Activated CD8-positive, alpha-beta T cell treated with anti-CD3 and anti-CD28 coated beads for 36 hours (primary cell): ENCODE measurements at regions of chr1 and their contacts with region 1.

Region 1: GRCh38 chr1:167454894-167455785 is 63.2 kb downstream of the CD247 start:
- DNase-seq: peak; percentile 90
- ATAC-seq: peak; percentile 54
- H3K4me3 Mint-ChIP-seq: peak overlapping the region; percentile 76
- H3K27ac Mint-ChIP-seq: peak overlapping the region; percentile 84
- H3K4me1 Mint-ChIP-seq: peaks cover 71% of the 10 kb centered on the region
- H3K27me3 Mint-ChIP-seq: no peaks in the 10 kb centered on the region
- CTCF ChIP-seq: no peak

Region 2: GRCh38 chr1:167136191-167136614 is 318.9 kb before region 1 on chr1:
- CTCF ChIA-PET with region 1: no interaction called
- POLR2A ChIA-PET with region 1: no interaction called
- intact Hi-C with region 1: no loop called
- DNase-seq: no peak
- ATAC-seq: no peak
- H3K4me3 Mint-ChIP-seq: no peak overlapping the region
- H3K27ac Mint-ChIP-seq: no peak overlapping the region
- H3K4me1 Mint-ChIP-seq: no peaks in the 10 kb centered on the region
- H3K27me3 Mint-ChIP-seq: peaks cover 4% of the 10 kb centered on the region
- CTCF ChIP-seq: no peak

Region 3: GRCh38 chr1:167442124-167442848 is 12.9 kb before region 1 on chr1:
- CTCF ChIA-PET with region 1: interaction called, 29 read pairs
- POLR2A ChIA-PET with region 1: interaction called, 18 read pairs
- intact Hi-C with region 1: no loop called
- DNase-seq: peak; percentile 93
- ATAC-seq: peak; percentile 73
- H3K4me3 Mint-ChIP-seq: no peak overlapping the region
- H3K27ac Mint-ChIP-seq: peak overlapping the region; percentile 68
- H3K4me1 Mint-ChIP-seq: peaks cover 88% of the 10 kb centered on the region
- H3K27me3 Mint-ChIP-seq: no peaks in the 10 kb centered on the region
- CTCF ChIP-seq: peak; percentile 88

Region 4: GRCh38 chr1:167467126-167467710 is 12.1 kb after region 1 on chr1:
- CTCF ChIA-PET with region 1: interaction called, 10 read pairs
- POLR2A ChIA-PET with region 1: interaction called, 28 read pairs
- intact Hi-C with region 1: no loop called
- DNase-seq: no peak
- ATAC-seq: peak; percentile 58
- H3K4me3 Mint-ChIP-seq: no peak overlapping the region
- H3K27ac Mint-ChIP-seq: peak overlapping the region; percentile 2
- H3K4me1 Mint-ChIP-seq: peaks cover 80% of the 10 kb centered on the region
- H3K27me3 Mint-ChIP-seq: no peaks in the 10 kb centered on the region
- CTCF ChIP-seq: no peak

Region 5: DNA sequence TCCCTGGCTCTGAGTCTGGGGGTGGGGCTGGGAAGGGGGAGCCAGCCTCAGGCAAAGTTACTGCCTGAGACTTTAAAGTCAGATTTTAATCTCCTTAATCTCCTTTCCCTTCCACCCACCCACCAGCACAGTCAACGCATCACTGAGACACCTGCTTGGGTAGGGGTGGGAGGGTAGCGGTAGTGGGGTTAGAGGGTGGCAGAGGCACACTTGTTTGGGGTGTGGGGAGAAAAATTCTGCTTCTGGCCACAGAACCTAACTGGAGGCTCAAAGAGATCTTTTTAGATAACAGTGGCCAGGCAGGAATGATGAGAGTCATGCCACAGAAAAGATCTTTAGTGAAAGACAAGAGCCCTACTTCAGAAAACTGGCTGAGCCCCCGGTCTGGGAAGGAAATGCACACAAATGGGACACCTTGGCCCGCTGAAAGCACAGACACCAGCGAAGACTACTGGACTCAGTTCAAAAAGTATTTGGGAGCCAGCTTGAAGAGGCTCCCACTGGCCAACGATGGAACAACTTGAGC is 19.1 kb after region 1 on chr1:
- CTCF ChIA-PET with region 1: interaction called, 10 read pairs
- POLR2A ChIA-PET with region 1: interaction called, 85 read pairs
- intact Hi-C with region 1: no loop called
- DNase-seq: peak; percentile 72
- ATAC-seq: peak; percentile 58
- H3K4me3 Mint-ChIP-seq: peak overlapping the region; percentile 59
- H3K27ac Mint-ChIP-seq: peak overlapping the region; percentile 86
- H3K4me1 Mint-ChIP-seq: peaks cover 88% of the 10 kb centered on the region
- H3K27me3 Mint-ChIP-seq: no peaks in the 10 kb centered on the region
- CTCF ChIP-seq: no peak

Region 6: DNA sequence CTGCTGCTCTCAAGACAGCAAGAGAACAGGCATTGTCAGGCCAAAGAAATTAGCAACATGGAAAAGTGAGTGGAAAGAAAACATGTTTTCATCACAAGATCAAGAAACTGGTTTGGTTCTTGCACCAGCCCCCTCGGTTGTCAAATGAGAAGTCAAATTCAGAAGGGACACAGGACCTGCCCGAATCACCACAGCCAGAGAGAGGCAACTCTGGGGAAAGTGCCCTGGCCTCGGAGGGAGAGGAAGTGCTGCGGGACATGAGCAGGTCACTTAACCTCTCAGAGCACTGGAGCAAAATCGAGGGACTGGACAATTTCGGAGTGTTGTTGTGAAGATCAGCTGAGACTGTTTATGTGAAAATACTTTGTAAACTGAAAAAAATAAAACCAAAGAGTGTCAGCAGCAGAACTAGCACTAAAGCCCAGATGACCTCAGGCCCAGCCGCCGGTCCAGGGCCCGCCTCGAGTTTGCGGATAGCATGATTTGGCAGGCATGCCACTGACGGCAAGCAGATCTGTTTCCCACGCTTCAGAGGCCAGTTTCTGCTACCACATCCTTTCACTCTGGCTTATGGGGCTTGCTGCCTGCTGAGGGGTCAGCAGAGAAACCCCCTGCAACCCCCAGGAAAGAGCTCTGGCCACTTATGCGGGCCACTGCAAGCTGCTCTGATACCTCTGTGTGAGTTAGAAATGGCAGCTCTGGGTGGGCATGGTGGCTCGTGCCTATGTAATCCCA is 31.1 kb after region 1 on chr1:
- CTCF ChIA-PET with region 1: interaction called, 8 read pairs
- POLR2A ChIA-PET with region 1: interaction called, 85 read pairs
- intact Hi-C with region 1: no loop called
- DNase-seq: peak; percentile 62
- ATAC-seq: no peak
- H3K4me3 Mint-ChIP-seq: peak overlapping the region; percentile 56
- H3K27ac Mint-ChIP-seq: peak overlapping the region; percentile 93
- H3K4me1 Mint-ChIP-seq: peaks cover 94% of the 10 kb centered on the region
- H3K27me3 Mint-ChIP-seq: no peaks in the 10 kb centered on the region
- CTCF ChIP-seq: no peak

Region 7: DNA sequence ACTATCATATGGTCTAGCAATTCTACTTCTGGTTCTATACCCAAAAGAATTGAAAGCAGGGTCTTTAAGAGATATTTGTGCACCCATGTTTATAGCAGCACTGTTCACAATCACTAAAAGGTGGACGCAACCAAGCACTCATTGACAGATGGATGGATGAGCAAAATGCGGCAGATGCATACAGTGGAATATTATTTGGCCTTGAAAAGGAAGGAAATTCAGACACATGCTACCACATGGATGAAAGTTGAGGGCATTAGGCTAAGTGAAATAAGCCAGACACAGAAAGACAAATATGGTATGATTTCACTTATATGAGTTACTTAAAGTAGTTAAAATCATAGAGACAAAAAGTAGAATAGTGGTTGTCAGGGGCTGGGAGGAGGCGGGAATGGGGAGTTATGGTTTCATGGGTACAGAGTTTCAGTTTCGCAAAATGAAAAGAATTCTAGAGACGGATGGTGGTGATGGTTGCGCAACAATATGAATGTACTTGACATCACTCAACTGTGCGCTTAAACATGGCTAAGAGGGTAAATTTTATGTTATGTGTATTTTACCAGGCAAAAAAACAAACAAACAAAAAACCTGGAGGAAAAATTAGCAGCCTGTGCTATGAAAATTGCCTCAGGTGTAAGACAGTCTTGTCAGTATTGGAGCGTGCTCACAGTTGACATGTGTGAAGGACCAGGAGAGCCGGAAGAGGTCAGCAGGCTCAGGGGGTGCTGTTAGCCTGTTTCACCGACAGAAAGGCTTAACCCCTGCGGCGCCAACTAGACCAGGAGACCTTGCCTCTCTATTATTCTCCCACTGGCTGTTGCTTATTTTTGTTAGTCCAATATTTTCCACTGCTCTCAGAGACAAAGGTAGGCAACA is 36.7 kb after region 1 on chr1:
- CTCF ChIA-PET with region 1: interaction called, 4 read pairs
- POLR2A ChIA-PET with region 1: interaction called, 85 read pairs
- intact Hi-C with region 1: no loop called
- DNase-seq: peak; percentile 74
- ATAC-seq: peak; percentile 46
- H3K4me3 Mint-ChIP-seq: peak overlapping the region; percentile 67
- H3K27ac Mint-ChIP-seq: peak overlapping the region; percentile 96
- H3K4me1 Mint-ChIP-seq: peaks cover 91% of the 10 kb centered on the region
- H3K27me3 Mint-ChIP-seq: no peaks in the 10 kb centered on the region
- CTCF ChIP-seq: no peak

Region 8: DNA sequence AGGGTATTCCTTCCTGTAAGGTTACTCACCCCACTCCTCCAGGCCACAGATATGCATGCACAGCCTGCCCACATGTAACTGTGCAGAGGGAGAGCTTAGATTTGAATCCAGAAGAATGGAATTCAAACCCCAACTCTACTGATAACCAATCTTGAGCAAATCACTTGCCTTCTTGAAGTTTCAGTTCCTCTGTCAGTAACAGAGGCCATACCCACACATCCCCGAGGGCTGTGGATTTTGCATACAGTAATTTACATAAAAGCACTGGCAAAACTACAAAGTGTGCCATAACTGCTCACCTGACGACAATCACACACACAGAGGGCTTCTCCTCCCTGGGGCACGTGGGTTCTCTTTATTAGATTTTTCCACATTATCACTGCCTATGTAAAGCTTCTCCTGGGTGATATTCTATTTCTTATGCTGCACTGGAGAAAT is 44.5 kb after region 1 on chr1:
- CTCF ChIA-PET with region 1: interaction called, 25 read pairs
- POLR2A ChIA-PET with region 1: interaction called, 33 read pairs
- intact Hi-C with region 1: loop called (anchors 5 kb)
- DNase-seq: peak; percentile 70
- ATAC-seq: peak; percentile 40
- H3K4me3 Mint-ChIP-seq: peak overlapping the region; percentile 29
- H3K27ac Mint-ChIP-seq: peak overlapping the region; percentile 97
- H3K4me1 Mint-ChIP-seq: peaks cover 98% of the 10 kb centered on the region
- H3K27me3 Mint-ChIP-seq: no peaks in the 10 kb centered on the region
- CTCF ChIP-seq: no peak